ENCODE measurements at regions of chr11 and their contacts with region 1.

Region 1: GRCh38 chr11:67468835-67469811 is at the start of gene TMEM134:
- DNase-seq: peak; percentile 88
- H3K4me3 Mint-ChIP-seq: peak within 1 kb of the TSS; percentile 91
- H3K27ac Mint-ChIP-seq: peak within 1 kb of the TSS; percentile 84
- H3K4me1 Mint-ChIP-seq: peaks cover 21% of the 10 kb centered on the region
- H3K27me3 Mint-ChIP-seq: no peaks in the 10 kb centered on the region
- total RNA-seq, gene TMEM134: 55.1 and 61.4 TPM in 2 replicates

Region 2: GRCh38 chr11:67245866-67246265 is 223.3 kb before region 1 on chr11:
- intact Hi-C with region 1: no loop called
- DNase-seq: no peak
- H3K4me3 Mint-ChIP-seq: no peak overlapping the region
- H3K27ac Mint-ChIP-seq: peak overlapping the region; percentile 13
- H3K4me1 Mint-ChIP-seq: peaks cover 71% of the 10 kb centered on the region
- H3K27me3 Mint-ChIP-seq: no peaks in the 10 kb centered on the region

Region 3: GRCh38 chr11:67391304-67392132 is 77.6 kb before region 1 on chr11 and contains the start of gene RAD9A:
- intact Hi-C with region 1: loop called (anchors 1 kb)
- DNase-seq: peak; percentile 89
- H3K4me3 Mint-ChIP-seq: peak within 1 kb of the TSS; percentile 90
- H3K27ac Mint-ChIP-seq: peak within 1 kb of the TSS; percentile 67
- H3K4me1 Mint-ChIP-seq: peaks cover 35% of the 10 kb centered on the region
- H3K27me3 Mint-ChIP-seq: peaks cover 4% of the 10 kb centered on the region
- total RNA-seq, gene RAD9A: 30.7 and 31.6 TPM in 2 replicates

Region 4: DNA sequence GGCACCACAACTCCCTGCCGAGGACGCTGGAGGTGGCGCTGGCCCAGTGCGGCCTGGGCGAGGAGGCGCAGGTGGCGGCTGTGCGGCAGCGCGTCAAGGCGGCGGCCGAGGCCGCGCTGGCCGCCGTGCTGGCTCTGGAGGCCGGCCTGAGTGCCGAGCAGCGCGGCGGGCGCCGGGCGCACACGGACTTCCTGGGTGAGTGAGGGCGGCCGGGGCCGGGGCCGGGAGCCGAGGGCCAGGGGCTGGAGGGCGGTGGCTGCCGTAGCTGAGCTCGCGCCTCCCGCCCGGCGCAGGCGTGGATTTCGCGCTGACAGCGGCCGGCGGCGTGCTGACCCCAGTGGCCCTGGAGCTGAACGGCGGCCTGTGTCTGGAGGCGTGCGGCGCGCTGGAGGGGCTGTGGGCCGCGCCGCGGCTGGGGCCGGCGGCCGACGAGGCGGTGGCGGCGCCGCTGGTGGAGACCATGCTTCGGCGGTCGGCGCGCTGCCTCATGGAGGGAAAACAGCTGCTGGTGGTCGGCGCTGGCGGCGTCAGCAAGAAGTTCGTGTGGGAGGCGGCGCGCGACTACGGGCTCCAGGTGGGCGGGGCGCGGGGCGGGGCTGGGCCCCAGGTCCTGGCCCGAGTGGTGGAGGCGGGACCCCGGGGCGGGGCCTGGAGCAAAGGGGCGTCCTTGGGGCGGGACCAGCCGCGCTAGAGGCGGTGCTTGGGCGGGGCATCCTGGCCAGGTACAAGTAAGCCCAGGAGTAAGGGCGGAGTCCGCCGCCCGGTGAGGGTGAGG is 48.3 kb before region 1 on chr11:
- intact Hi-C with region 1: loop called (anchors 1 kb)
- DNase-seq: peak; percentile 95
- H3K4me3 Mint-ChIP-seq: peak overlapping the region; percentile 72
- H3K27ac Mint-ChIP-seq: peak overlapping the region; percentile 70
- H3K4me1 Mint-ChIP-seq: peaks cover 30% of the 10 kb centered on the region
- H3K27me3 Mint-ChIP-seq: peaks cover 11% of the 10 kb centered on the region

Region 5: DNA sequence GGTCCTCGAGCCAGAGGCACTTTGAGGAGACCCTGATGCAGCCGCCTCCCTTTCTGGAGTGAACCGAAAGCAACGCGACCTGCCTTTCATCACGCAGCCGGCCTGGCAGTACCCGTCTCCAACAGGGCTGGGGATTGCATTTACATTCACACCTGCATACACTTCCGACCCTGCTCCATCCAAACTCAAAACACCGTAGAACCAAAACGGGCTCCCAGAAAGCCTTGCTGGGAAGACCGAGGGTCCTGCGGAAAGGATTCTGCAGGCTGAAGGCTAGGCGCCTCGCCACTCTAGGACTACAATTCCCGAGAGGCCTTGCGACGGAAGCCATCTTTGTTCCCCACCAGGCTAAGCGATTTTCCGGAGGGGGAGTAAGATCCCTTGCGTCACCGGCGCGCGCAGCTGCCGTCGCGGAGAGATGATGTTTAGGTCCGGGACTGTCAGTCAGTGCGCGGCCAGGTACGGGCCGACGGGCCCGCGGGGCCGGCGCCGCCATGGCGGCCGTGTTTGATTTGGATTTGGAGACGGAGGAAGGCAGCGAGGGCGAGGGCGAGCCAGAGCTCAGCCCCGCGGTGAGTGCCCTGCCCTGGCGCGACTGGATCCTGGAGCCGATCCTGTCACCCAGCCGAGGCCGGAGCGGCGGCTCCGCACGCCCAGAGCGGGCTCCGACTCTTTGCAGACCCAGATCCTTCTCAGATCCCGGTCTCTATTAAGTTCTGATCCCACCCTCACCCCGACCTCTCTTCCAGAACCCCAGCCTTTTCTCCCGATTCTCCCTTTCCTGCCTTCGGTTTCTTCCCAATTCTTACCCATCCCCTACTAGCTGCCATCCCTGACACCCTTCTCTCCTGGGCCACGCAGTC is 40.8 kb before region 1 on chr11 and contains the start of gene RPS6KB2:
- intact Hi-C with region 1: loop called (anchors 1 kb)
- DNase-seq: peak; percentile 98
- H3K4me3 Mint-ChIP-seq: peak within 1 kb of the TSS; percentile 98
- H3K27ac Mint-ChIP-seq: peak within 1 kb of the TSS; percentile 97
- H3K4me1 Mint-ChIP-seq: peaks cover 27% of the 10 kb centered on the region
- H3K27me3 Mint-ChIP-seq: no peaks in the 10 kb centered on the region
- total RNA-seq, gene RPS6KB2: 84.1 and 86.2 TPM in 2 replicates

Region 6: DNA sequence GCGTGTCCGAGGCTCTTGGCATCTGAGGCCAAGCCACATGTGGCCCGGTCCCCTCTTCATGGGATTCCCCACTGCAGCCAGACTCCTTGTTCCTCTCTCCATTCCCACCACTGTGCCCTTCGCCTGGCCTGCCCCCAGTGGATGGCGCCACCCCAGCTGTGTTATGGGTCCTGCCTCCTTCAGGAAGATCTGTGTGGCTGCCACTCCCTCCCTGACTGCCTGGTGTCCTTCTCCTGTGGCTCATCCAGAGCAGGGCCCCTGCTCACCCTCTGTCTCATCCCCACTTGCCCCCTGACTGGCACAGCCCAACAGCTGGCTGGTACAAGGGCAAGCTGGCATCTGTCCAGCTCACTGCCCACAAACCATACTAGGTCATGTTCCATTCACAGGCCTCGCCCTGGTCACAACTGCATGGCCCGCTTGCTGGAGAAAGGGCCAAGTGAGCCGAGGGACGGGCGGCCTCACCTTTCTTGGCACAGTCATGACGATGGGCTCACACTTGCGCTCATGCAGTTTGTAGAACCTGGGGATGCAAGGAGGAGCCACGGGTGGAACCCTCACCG is 29.7 kb before region 1 on chr11:
- intact Hi-C with region 1: loop called (anchors 1 kb)
- DNase-seq: peak; percentile 24
- H3K4me3 Mint-ChIP-seq: peak overlapping the region; percentile 90
- H3K27ac Mint-ChIP-seq: peak overlapping the region; percentile 97
- H3K4me1 Mint-ChIP-seq: peaks cover 33% of the 10 kb centered on the region
- H3K27me3 Mint-ChIP-seq: no peaks in the 10 kb centered on the region

Region 7: GRCh38 chr11:68146704-68147474 is 677.8 kb after region 1 on chr11:
- intact Hi-C with region 1: no loop called
- DNase-seq: no peak
- H3K4me3 Mint-ChIP-seq: no peak overlapping the region
- H3K27ac Mint-ChIP-seq: no peak overlapping the region
- H3K4me1 Mint-ChIP-seq: peaks cover 7% of the 10 kb centered on the region
- H3K27me3 Mint-ChIP-seq: peaks cover 6% of the 10 kb centered on the region